Naive thymus-derived CD8-positive, alpha-beta T cell (primary cell): ENCODE measurements at regions of chr17 and their contacts with region 1.

Region 1: GRCh38 chr17:39927101-39927928 is at the starts of genes LRRC3C and ORMDL3:
- DNase-seq: peak; percentile 85 to 93 (median 90)
- ATAC-seq: peak; percentile 69 to 72
- H3K4me3 Mint-ChIP-seq: peak within 1 kb of the TSS; percentile 87 to 99 (median 92)
- H3K27ac Mint-ChIP-seq: peak within 1 kb of the TSS; percentile 93 to 98 (median 96)
- H3K4me1 Mint-ChIP-seq: peaks cover 24 to 55% (median 50%) of the 10 kb centered on the region in 4 donors
- H3K27me3 Mint-ChIP-seq: no peaks in the 10 kb centered on the region
- polyA plus RNA-seq, gene LRRC3C: not detected
- polyA plus RNA-seq, gene ORMDL3: 100 to 335 (median 249) TPM

Region 2: DNA sequence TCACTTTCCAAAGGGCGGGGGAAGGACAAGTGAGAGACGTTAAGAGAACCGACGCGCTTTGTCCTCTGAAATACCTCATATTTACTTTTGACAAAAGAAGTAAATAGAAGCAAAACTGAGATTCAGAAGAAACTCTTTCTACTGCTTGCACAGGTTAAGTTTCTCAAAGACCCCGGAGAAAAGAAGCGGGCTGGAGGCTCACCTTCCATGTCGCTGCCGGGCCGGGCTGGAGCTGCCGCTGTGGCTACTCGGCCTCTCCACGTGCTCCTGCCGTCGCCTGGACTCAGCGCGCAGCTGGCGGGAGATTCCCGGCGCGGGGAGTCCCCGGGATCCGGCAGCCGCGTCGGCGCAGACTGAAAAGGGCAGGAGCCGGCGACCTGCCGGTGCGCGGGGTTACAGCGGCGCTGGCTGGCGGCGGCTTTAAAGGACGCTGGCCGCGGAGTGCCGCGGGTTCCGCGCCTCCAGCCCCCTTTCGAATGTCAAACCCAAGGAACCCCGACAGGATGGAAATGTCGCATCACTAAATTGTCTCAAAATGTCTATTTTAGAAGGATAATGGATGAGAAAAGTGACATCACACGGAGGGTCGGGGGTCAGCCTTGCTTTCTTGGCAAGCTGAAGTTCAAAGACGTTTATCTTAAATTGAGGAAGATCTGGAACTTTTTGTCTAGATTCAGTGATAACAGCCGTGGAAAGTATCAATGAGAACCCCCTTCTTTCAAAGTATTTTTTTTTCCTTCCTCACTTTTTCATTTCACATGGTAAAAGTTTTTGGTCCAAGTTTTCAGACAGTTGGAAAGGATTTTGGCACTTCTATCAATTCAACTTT is 63.2 kb before region 1 on chr17 and contains the start of gene IKZF3:
- POLR2A ChIA-PET with region 1: interaction called, 16 read pairs
- DNase-seq: peak; percentile 71 to 87 (median 80)
- ATAC-seq: peak; percentile 75 to 85
- H3K4me3 Mint-ChIP-seq: peak within 1 kb of the TSS; percentile 92 to 99 (median 96)
- H3K27ac Mint-ChIP-seq: peak within 1 kb of the TSS; percentile 96 to 98 (median 98)
- H3K4me1 Mint-ChIP-seq: peaks cover 26 to 74% (median 64%) of the 10 kb centered on the region in 4 donors
- H3K27me3 Mint-ChIP-seq: no peaks in the 10 kb centered on the region
- polyA plus RNA-seq, gene IKZF3: 18.8 to 59.2 (median 21.5) TPM

Region 3: GRCh38 chr17:39916918-39917317 is 10.4 kb before region 1 on chr17:
- POLR2A ChIA-PET with region 1: interaction called, 18 read pairs
- DNase-seq: peak in 1 of 10 donors; percentile 10
- ATAC-seq: no peak
- H3K4me3 Mint-ChIP-seq: peak overlapping the region in 1 of 10 donors; percentile 51
- H3K27ac Mint-ChIP-seq: peak overlapping the region in 9 of 10 donors; percentile 9 to 82 (median 61)
- H3K4me1 Mint-ChIP-seq: peaks cover 32 to 59% (median 47%) of the 10 kb centered on the region in 4 donors
- H3K27me3 Mint-ChIP-seq: no peaks in the 10 kb centered on the region

Region 4: GRCh38 chr17:39952680-39953470 is 25.6 kb after region 1 on chr17:
- POLR2A ChIA-PET with region 1: interaction called, 46 read pairs
- DNase-seq: peak; percentile 85 to 99 (median 92)
- ATAC-seq: peak; percentile 85 to 87
- H3K4me3 Mint-ChIP-seq: peak overlapping the region; percentile 78 to 93 (median 84)
- H3K27ac Mint-ChIP-seq: peak overlapping the region; percentile 65 to 95 (median 88)
- H3K4me1 Mint-ChIP-seq: peaks cover 7 to 35% (median 31%) of the 10 kb centered on the region in 4 donors
- H3K27me3 Mint-ChIP-seq: no peaks in the 10 kb centered on the region